Mammary epithelial cell (primary cell): ENCODE measurements at regions of chr16 and their contacts with region 1.

Region 1: GRCh38 chr16:53291757-53292392 is 142.4 kb upstream of the RBL2 start:
- DNase-seq: peak; percentile 31
- H3K4me3 ChIP-seq: no peak overlapping the region
- H3K27ac ChIP-seq: no peak overlapping the region
- H3K4me1 ChIP-seq: no peaks in the 10 kb centered on the region
- H3K27me3 ChIP-seq: no peaks in the 10 kb centered on the region
- CTCF ChIP-seq: no peak

Region 2: GRCh38 chr16:53356478-53357200 is 64.8 kb after region 1 on chr16:
- CTCF ChIA-PET with region 1: no interaction called
- dilution Hi-C with region 1: loop called (anchors 5 kb)
- in situ Hi-C with region 1: no loop called
- intact Hi-C with region 1: no loop called
- DNase-seq: no peak
- H3K4me3 ChIP-seq: no peak overlapping the region
- H3K27ac ChIP-seq: no peak overlapping the region
- H3K4me1 ChIP-seq: no peaks in the 10 kb centered on the region
- H3K27me3 ChIP-seq: no peaks in the 10 kb centered on the region
- CTCF ChIP-seq: no peak

Region 3: GRCh38 chr16:53369921-53370320 is 78.0 kb after region 1 on chr16:
- CTCF ChIA-PET with region 1: no interaction called
- dilution Hi-C with region 1: no loop called
- in situ Hi-C with region 1: no loop called
- intact Hi-C with region 1: no loop called
- DNase-seq: peak; percentile 12
- H3K4me3 ChIP-seq: no peak overlapping the region
- H3K27ac ChIP-seq: no peak overlapping the region
- H3K4me1 ChIP-seq: peaks cover 11% of the 10 kb centered on the region
- H3K27me3 ChIP-seq: peaks cover 7% of the 10 kb centered on the region
- CTCF ChIP-seq: no peak